Esophagus muscularis mucosa (tissue), 4 donors: ENCODE measurements at regions of chr14 and their contacts with region 1.

Region 1: DNA sequence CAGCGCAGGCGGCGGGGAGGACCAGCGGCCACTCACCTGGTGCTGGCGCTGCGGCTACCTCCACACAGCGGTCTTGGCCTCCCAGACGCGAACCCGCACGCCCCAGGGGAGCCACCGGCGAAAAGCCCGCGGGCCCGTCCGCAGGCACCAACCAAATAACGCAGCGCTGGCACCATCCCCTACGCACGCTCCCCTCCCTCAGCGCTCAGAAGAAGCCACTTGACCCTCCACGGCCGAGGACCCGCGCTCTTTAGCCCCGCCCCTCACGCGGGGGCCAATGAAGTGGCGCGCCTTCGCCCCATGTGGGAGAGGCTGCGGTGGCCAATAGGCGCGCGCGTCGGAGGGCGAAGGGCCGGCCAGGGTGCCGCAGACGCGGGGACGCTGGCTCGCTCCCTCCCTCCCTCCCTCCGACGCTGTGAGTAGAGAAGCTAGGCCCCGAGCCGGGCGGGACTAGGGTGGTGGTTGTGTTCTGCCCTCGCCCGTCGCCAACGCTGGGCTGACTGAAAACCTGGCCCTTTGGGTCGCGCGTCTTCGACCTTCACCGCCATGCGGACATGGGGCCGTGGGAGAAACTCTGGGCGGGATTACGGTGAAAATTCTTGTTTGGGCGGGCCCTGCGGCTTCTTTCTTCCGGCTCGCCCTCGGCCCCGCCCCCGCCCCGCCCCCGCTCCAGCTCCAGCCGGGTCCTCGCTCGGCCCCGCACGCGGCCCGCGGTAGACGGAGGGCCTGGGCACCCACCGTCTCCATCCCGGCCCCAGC is at the starts of genes DMAC2L and L2HGDH:
- DNase-seq: peak; percentile 97
- H3K4me3 ChIP-seq: peak within 1 kb of the TSS; percentile 79 to 98 (median 84)
- H3K27ac ChIP-seq: peak within 1 kb of the TSS; percentile 86 to 97 (median 92)
- H3K4me1 ChIP-seq: peaks cover 13 to 22% (median 16%) of the 10 kb centered on the region in 4 donors
- H3K27me3 ChIP-seq: no peaks in the 10 kb centered on the region
- CTCF ChIP-seq: peak in 1 of 3 experiments; percentile 1
- EP300 ChIP-seq: no peak
- POLR2A ChIP-seq: peak; percentile 67
- total RNA-seq, gene DMAC2L: 9.9 to 33.6 (median 14.6) TPM
- total RNA-seq, gene L2HGDH: 4.0 to 12.2 (median 7.7) TPM

Region 2: DNA sequence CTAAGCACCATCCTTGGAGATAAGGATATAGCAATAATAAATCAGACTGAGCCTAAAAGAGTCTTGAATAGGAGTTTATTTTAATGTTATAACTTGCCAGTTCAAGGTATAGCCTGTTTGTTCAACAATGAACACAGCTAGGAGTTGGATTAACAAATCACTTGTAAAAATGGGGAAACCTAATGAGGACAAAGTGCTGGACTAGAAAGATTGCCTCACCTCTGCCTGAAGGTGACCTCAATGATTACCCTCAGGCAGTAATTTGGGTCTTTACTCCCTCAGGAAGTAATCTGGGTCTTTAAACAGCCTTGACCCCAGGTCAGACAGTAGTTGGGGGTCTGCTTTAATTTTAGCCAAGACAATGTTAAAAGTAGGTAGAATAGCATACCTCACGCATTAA is 120.0 kb after region 1 on chr14:
- intact Hi-C with region 1: no loop called
- DNase-seq: no peak
- H3K4me3 ChIP-seq: no peak overlapping the region
- H3K27ac ChIP-seq: no peak overlapping the region
- H3K4me1 ChIP-seq: no peaks in the 10 kb centered on the region
- H3K27me3 ChIP-seq: no peaks in the 10 kb centered on the region
- CTCF ChIP-seq: no peak
- EP300 ChIP-seq: no peak
- POLR2A ChIP-seq: no peak

Region 3: GRCh38 chr14:50532502-50533240 is 220.5 kb after region 1 on chr14 and contains the start of gene MAP4K5:
- intact Hi-C with region 1: loop called (anchors 2 kb)
- DNase-seq: peak; percentile 95
- H3K4me3 ChIP-seq: peak within 1 kb of the TSS; percentile 87 to 96 (median 92)
- H3K27ac ChIP-seq: peak within 1 kb of the TSS; percentile 93 to 98 (median 97)
- H3K4me1 ChIP-seq: peaks cover 12 to 47% (median 43%) of the 10 kb centered on the region in 4 donors
- H3K27me3 ChIP-seq: no peaks in the 10 kb centered on the region
- CTCF ChIP-seq: peak; percentile 95 to 97 (median 96)
- EP300 ChIP-seq: no peak
- POLR2A ChIP-seq: peak; percentile 43
- total RNA-seq, gene MAP4K5: 84.4 to 108 (median 91.2) TPM

Region 4: GRCh38 chr14:50667996-50668825 is 356.1 kb after region 1 on chr14 and contains the start of gene SAV1:
- intact Hi-C with region 1: loop called (anchors 10 kb)
- DNase-seq: peak; percentile 96
- H3K4me3 ChIP-seq: peak within 1 kb of the TSS; percentile 80 to 94 (median 86)
- H3K27ac ChIP-seq: peak within 1 kb of the TSS; percentile 96 to 100 (median 98)
- H3K4me1 ChIP-seq: peaks cover 7 to 41% (median 30%) of the 10 kb centered on the region in 4 donors
- H3K27me3 ChIP-seq: no peaks in the 10 kb centered on the region
- CTCF ChIP-seq: no peak
- EP300 ChIP-seq: no peak
- POLR2A ChIP-seq: peak; percentile 74
- total RNA-seq, gene SAV1: 34.5 to 48.5 (median 40.2) TPM